ENCODE measurements at regions of chr4 and their contacts with region 1.

Region 1: DNA sequence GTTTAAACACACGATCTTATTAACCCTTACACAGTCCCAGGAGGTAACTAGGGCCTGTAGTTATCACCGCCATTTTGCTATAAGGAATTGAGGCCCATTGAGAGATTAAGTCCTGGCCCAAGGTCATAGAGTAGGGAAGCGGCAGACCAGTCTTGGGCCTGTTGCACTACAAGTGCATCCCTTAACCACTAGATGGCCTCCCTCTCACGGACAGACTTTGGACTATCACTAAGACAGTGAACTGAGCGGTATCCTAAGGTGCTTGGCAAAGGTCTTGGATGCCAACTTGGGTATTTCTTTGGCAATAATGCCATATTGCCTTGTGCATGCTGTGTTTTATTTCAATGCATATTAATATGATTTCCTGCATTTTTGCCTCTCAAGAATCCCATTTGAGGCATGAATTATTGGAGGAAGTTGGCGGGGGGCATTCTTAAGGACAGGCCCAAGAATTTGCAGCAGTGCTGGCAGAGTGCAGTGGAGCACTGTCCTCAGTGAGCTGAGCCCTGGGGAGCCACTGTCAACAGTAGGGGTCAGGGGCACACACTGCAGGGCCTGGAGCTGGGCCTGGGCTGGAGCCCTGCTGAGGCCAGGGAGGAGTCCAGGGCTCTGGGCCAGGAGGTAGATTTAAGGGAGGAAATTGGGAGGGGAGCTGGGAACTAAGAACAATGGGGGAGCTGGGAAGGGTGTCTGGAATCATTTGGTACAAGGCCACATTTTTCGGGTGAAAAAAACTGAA is 147.4 kb downstream of the SMIM20 start:
- DNase-seq: peak; percentile 54
- H3K4me3 Mint-ChIP-seq: no peak overlapping the region
- H3K27ac Mint-ChIP-seq: no peak overlapping the region
- H3K4me1 Mint-ChIP-seq: peaks cover 21% of the 10 kb centered on the region
- H3K27me3 Mint-ChIP-seq: peaks cover 6% of the 10 kb centered on the region

Region 2: GRCh38 chr4:25792200-25792791 is 269.1 kb before region 1 on chr4:
- CTCF ChIA-PET with region 1: no interaction called
- intact Hi-C with region 1: no loop called
- DNase-seq: peak; percentile 18
- H3K4me3 Mint-ChIP-seq: no peak overlapping the region
- H3K27ac Mint-ChIP-seq: no peak overlapping the region
- H3K4me1 Mint-ChIP-seq: no peaks in the 10 kb centered on the region
- H3K27me3 Mint-ChIP-seq: no peaks in the 10 kb centered on the region

Region 3: GRCh38 chr4:26039639-26040359 is 21.6 kb before region 1 on chr4:
- CTCF ChIA-PET with region 1: no interaction called
- intact Hi-C with region 1: no loop called
- DNase-seq: no peak
- H3K4me3 Mint-ChIP-seq: no peak overlapping the region
- H3K27ac Mint-ChIP-seq: no peak overlapping the region
- H3K4me1 Mint-ChIP-seq: no peaks in the 10 kb centered on the region
- H3K27me3 Mint-ChIP-seq: no peaks in the 10 kb centered on the region

Region 4: DNA sequence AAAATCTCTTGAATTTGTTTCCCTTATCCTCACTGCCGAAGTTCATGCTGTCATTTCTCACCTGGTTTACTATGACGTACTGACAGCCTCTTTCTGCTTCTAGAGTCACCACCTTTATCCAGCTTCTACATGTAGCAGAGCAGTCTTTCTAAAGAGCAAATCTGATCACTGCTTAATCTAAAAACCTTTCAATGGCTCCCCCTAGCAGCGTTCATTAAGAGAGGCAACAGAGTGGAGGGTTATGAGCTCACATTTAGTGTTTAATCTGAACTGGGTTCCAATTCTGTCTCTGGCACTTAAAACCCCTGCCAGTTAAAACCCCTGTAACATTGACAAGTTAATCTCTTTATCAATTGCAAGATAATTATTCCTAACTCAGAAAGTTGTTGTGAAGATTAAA is 263.8 kb after region 1 on chr4:
- CTCF ChIA-PET with region 1: interaction called, 10 read pairs
- intact Hi-C with region 1: loop called (anchors 1 kb)
- DNase-seq: peak; percentile 46
- H3K4me3 Mint-ChIP-seq: peak overlapping the region; percentile 31
- H3K27ac Mint-ChIP-seq: no peak overlapping the region
- H3K4me1 Mint-ChIP-seq: peaks cover 39% of the 10 kb centered on the region
- H3K27me3 Mint-ChIP-seq: no peaks in the 10 kb centered on the region

Region 5: DNA sequence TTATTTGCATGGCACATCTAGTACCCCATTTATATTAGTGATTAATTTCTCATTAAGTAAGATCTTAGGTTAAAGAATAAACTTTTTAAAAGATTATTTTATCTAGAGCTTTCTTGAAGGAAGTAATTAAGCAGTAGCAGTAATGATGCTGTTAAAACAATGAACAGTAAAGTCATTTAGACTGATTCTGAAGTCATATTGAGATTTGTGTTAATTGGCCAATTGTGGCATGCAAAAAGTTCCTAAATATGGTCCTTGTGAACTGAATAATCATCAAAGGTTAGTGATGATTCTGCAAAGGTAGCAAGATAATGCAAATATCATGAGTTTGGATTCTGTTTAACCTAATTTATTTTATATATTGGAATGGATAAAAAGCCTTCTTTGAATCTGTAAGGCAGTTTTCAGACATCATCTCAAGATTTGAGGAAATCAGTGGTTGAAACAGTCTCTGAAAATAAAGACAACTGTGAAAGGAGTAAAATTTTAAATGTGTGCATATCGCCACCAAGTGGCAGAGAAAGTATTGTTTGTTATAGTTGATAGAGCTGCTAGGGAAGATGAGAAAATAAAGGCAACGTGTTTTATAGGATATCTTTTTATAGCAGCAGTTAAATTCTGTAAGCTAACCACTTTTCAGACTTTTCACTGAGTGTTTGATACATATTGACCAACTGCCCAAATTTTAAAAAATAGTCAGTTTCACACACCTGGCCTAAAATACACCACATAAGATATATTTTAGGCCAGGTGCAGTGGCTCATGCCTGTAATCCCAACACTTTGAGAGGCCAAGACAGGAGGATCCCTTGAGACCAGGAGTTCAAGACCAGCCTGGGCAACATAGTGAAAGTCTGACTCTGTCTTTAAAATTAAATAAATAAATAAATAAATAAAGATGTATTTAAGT is 349.2 kb after region 1 on chr4:
- CTCF ChIA-PET with region 1: interaction called, 6 read pairs
- intact Hi-C with region 1: loop called (anchors 1 kb)
- DNase-seq: peak; percentile 49
- H3K4me3 Mint-ChIP-seq: no peak overlapping the region
- H3K27ac Mint-ChIP-seq: no peak overlapping the region
- H3K4me1 Mint-ChIP-seq: peaks cover 5% of the 10 kb centered on the region
- H3K27me3 Mint-ChIP-seq: no peaks in the 10 kb centered on the region

Measured in activated naive CD4-positive, alpha-beta T cell treated with anti-CD3 and anti-CD28 coated beads for 36 hours (primary cell).